ENCODE measurements at regions of chr2 and their contacts with region 1.

Region 1: GRCh38 chr2:227862227-227862740 is 9.1 kb upstream of the DAW1 start:
- DNase-seq: peak in 4 of 5 donors; percentile 26 to 49 (median 37)
- H3K4me3 ChIP-seq: no peak overlapping the region
- H3K4me3 Mint-ChIP-seq: no peak overlapping the region
- H3K27ac ChIP-seq: no peak overlapping the region
- H3K27ac Mint-ChIP-seq: peak overlapping the region in 1 of 7 donors; percentile 31
- H3K4me1 ChIP-seq: peaks cover 3% of the 10 kb centered on the region
- H3K4me1 Mint-ChIP-seq: peaks cover 0 to 9% (median 4%) of the 10 kb centered on the region in 4 donors
- H3K27me3 ChIP-seq: no peaks in the 10 kb centered on the region
- H3K27me3 Mint-ChIP-seq: peaks cover 0 to 4% of the 10 kb centered on the region in 2 donors

Region 2: DNA sequence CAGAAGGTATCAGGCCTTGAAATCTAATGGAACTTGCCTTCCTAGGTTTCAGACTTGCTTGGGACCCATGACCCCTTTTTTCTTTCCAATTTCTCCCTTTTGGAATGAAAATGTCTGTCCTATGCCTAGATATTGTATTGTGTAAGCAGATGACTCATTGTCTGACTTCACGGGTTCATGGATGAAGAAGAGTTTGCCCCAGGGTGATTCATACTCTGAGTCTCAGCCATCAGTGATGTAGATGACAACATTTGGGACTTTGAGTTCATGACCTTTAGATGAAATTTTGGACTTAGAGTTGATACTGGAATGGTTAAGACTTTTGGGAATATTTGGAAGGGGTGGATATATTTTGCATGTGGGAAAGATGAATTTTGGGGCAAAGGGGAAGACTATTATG is 206.8 kb before region 1 on chr2:
- CTCF ChIA-PET with region 1: interaction called, 56 read pairs
- POLR2A ChIA-PET with region 1: interaction called, 4 read pairs
- intact Hi-C with region 1: loop called (anchors 1 kb)
- DNase-seq: no peak
- H3K4me3 ChIP-seq: no peak overlapping the region
- H3K4me3 Mint-ChIP-seq: no peak overlapping the region
- H3K27ac ChIP-seq: no peak overlapping the region
- H3K27ac Mint-ChIP-seq: no peak overlapping the region
- H3K4me1 ChIP-seq: no peaks in the 10 kb centered on the region
- H3K4me1 Mint-ChIP-seq: no peaks in the 10 kb centered on the region
- H3K27me3 ChIP-seq: no peaks in the 10 kb centered on the region
- H3K27me3 Mint-ChIP-seq: peaks cover 0 to 2% of the 10 kb centered on the region in 2 donors

Region 3: GRCh38 chr2:227774011-227774624 is 88.2 kb before region 1 on chr2:
- CTCF ChIA-PET with region 1: interaction called, 21 read pairs
- POLR2A ChIA-PET with region 1: no interaction called
- intact Hi-C with region 1: loop called (anchors 1 kb)
- DNase-seq: peak in 2 of 5 donors; percentile 8 to 22
- H3K4me3 ChIP-seq: no peak overlapping the region
- H3K4me3 Mint-ChIP-seq: no peak overlapping the region
- H3K27ac ChIP-seq: no peak overlapping the region
- H3K27ac Mint-ChIP-seq: peak overlapping the region in 6 of 7 donors; percentile 12 to 65 (median 38)
- H3K4me1 ChIP-seq: no peaks in the 10 kb centered on the region
- H3K4me1 Mint-ChIP-seq: peaks cover 3 to 19% (median 11%) of the 10 kb centered on the region in 4 donors
- H3K27me3 ChIP-seq: no peaks in the 10 kb centered on the region
- H3K27me3 Mint-ChIP-seq: peaks cover 0 to 1% of the 10 kb centered on the region in 2 donors

Region 4: GRCh38 chr2:227805578-227805977 is 56.7 kb before region 1 on chr2:
- CTCF ChIA-PET with region 1: interaction called, 7 read pairs
- POLR2A ChIA-PET with region 1: interaction called, 4 read pairs
- intact Hi-C with region 1: loop called (anchors 5 kb)
- DNase-seq: peak; percentile 51 to 83 (median 57)
- H3K4me3 ChIP-seq: peak overlapping the region in 1 of 2 donors; percentile 18
- H3K4me3 Mint-ChIP-seq: peak overlapping the region; percentile 81 to 89 (median 84)
- H3K27ac ChIP-seq: peak overlapping the region; percentile 61
- H3K27ac Mint-ChIP-seq: peak overlapping the region; percentile 89 to 99 (median 91)
- H3K4me1 ChIP-seq: peaks cover 9% of the 10 kb centered on the region
- H3K4me1 Mint-ChIP-seq: peaks cover 11 to 18% (median 12%) of the 10 kb centered on the region in 4 donors
- H3K27me3 ChIP-seq: no peaks in the 10 kb centered on the region
- H3K27me3 Mint-ChIP-seq: no peaks in the 10 kb centered on the region

Region 5: DNA sequence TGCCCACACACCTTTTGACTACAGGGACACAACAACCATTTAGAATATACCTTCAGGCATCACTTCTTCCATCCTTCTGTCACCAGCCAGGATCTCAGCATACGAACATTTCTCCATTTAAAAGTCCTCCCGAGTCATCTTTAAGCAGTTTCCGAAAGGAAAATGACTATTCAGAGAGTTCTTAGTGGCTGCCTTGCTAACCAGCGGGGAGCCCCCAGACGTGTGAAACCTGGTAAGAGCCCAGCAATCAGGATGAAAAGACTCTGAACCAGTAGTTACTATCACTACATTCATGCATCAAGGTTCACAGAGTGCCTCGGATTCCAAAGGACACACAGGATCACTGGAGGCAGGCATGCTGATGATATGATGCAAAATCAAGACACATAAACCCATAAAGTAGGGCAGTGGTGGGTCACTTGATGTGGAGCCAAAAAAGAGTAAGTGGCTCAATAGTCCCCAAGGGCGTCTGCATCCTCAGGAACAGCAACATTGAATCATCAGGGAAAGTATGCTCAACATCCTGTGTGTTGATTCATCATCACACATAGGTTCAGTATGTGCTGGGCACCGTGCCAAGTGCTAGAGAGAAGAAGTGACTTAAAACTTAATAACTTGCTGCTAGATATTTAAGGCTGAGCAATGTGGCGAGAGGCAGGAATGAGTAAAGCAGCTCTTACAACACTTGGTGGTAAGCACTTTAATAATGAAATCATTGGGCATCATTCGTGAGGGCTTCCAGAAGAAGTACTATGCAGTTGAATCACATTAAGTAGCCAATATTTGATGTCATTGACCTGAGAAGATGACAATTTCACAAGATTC is 44.2 kb before region 1 on chr2:
- CTCF ChIA-PET with region 1: interaction called, 11 read pairs
- POLR2A ChIA-PET with region 1: no interaction called
- intact Hi-C with region 1: no loop called
- DNase-seq: peak; percentile 47 to 89 (median 58)
- H3K4me3 ChIP-seq: no peak overlapping the region
- H3K4me3 Mint-ChIP-seq: peak overlapping the region in 6 of 8 donors; percentile 3 to 53 (median 45)
- H3K27ac ChIP-seq: peak overlapping the region; percentile 40
- H3K27ac Mint-ChIP-seq: peak overlapping the region; percentile 29 to 89 (median 79)
- H3K4me1 ChIP-seq: peaks cover 16% of the 10 kb centered on the region
- H3K4me1 Mint-ChIP-seq: peaks cover 14 to 35% (median 21%) of the 10 kb centered on the region in 4 donors
- H3K27me3 ChIP-seq: no peaks in the 10 kb centered on the region
- H3K27me3 Mint-ChIP-seq: peaks cover 0 to 3% of the 10 kb centered on the region in 2 donors

Region 6: DNA sequence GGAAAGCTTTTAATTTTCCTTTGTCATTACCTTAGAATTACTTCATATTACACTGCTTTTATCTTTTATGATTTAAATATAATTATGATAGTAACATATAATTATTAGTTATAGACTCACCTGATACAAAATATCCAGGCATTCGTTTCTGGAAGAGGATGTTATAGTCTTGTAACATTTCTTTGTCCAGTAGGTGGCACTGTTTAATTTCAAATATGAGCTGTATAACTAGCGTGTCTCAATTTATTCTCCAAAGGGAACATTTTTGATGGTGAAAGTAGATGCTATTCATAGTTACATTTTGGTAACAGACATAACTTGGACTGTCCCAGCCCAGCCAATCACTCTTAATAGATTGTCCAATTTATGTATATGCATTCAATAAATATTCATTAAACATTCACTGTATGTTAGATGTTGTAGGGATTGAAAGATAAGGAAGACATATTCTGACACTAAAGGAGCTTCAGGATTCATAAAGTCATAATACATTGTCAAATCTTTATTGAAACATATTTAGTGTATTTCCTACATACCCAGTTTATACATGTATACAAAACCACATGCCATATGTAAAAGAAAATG is 28.3 kb after region 1 on chr2:
- CTCF ChIA-PET with region 1: interaction called, 18 read pairs
- POLR2A ChIA-PET with region 1: no interaction called
- intact Hi-C with region 1: no loop called
- DNase-seq: peak in 4 of 5 donors; percentile 11 to 41 (median 20)
- H3K4me3 ChIP-seq: no peak overlapping the region
- H3K4me3 Mint-ChIP-seq: no peak overlapping the region
- H3K27ac ChIP-seq: no peak overlapping the region
- H3K27ac Mint-ChIP-seq: no peak overlapping the region
- H3K4me1 ChIP-seq: no peaks in the 10 kb centered on the region
- H3K4me1 Mint-ChIP-seq: peaks cover 0 to 1% (median 0%) of the 10 kb centered on the region in 4 donors
- H3K27me3 ChIP-seq: no peaks in the 10 kb centered on the region
- H3K27me3 Mint-ChIP-seq: peaks cover 2 to 4% of the 10 kb centered on the region in 2 donors